Dendritic cell treated with granulocyte-macrophage colony-stimulating factor and Interleukin-4, amounts not matched to agents 40 ng/mL and 50 ng/mL, for 4 days (primary cell): ENCODE measurements at regions of chr11 and their contacts with region 1.

Region 1: DNA sequence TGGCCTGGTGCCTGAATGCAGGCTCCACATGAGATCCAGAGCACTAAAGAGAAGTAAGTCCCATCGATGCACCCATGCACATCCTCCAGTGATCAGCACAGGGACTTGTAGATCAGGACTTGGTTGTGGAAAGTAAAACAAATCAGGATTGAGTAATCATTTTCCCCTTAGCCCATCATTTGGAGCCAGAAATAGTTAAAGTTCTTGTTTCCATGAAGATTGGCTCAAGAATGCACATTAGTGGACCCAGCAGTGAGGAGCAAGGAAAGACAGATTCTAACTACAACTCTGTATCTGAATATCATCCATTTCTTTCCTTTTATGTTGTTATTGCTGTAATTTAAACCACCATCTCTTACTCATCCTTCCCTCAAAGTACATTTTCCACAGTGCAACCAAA is 19.1 kb downstream of the CCDC83 start:
- H3K4me3 Mint-ChIP-seq: no peak overlapping the region
- H3K27ac Mint-ChIP-seq: no peak overlapping the region
- H3K4me1 Mint-ChIP-seq: peaks cover 5% of the 10 kb centered on the region
- H3K27me3 Mint-ChIP-seq: peaks cover 1% of the 10 kb centered on the region

Region 2: DNA sequence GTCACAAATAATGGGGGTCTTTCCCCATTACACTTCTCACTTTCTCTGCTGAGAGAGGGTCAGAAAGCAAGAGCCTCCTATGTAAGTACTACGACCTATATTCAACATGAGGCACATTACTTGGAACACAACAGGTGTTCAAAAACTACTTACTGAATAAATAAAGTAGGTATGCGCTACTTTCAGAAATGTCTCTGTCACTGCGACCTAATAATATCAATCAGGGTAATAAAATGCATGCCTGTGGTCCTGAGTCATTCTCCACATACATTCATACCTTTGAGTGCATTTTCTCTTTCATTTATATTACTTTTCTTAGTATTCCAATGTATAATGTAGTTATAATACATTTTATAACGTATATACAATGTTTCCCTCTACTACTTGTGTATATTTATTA is 1086.0 kb before region 1 on chr11:
- intact Hi-C with region 1: no loop called
- H3K4me3 Mint-ChIP-seq: no peak overlapping the region
- H3K27ac Mint-ChIP-seq: no peak overlapping the region
- H3K4me1 Mint-ChIP-seq: no peaks in the 10 kb centered on the region
- H3K27me3 Mint-ChIP-seq: no peaks in the 10 kb centered on the region

Region 3: GRCh38 chr11:85930879-85931366 is 56.7 kb after region 1 on chr11:
- intact Hi-C with region 1: loop called (anchors 5 kb)
- H3K4me3 Mint-ChIP-seq: no peak overlapping the region
- H3K27ac Mint-ChIP-seq: no peak overlapping the region
- H3K4me1 Mint-ChIP-seq: peaks cover 18% of the 10 kb centered on the region
- H3K27me3 Mint-ChIP-seq: peaks cover 19% of the 10 kb centered on the region